Left ventricle myocardium inferior (tissue), 1 donor: ENCODE measurements at regions of chrX and their contacts with region 1.

Region 1: GRCh38 chrX:118226090-118226428 is 109.4 kb upstream of the KLHL13 start:
- DNase-seq: no peak
- H3K4me3 ChIP-seq: no peak overlapping the region
- H3K27ac ChIP-seq: no peak overlapping the region
- H3K4me1 ChIP-seq: no peaks in the 10 kb centered on the region
- H3K27me3 ChIP-seq: no peaks in the 10 kb centered on the region
- CTCF ChIP-seq: peak; percentile 50

Region 2: DNA sequence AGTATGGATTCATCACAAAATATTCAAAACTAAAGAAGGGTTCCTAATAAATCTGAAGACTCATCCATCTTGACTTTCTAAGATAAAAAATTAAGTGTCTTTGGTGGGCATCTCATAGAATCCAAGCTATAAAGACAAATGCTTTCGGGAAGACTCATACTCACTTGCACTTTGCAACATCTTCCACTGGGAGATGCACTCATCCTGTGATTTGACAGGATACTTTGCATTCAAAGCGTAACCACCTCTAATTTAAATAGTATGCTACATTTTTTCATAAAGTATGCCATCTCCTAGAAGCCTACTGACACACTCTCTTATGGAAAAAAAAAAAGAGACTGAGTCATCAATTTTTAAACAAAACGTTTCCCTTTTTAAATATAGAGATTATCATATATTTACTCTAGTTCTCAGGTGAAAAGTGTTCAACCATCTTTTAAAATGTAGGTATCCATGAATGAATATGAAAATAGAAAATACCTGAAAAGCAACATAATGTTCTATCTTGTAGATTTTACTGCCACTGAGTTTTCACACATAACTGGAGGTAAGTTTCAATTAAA is 229.1 kb before region 1 on chrX:
- intact Hi-C with region 1: loop called (anchors 10 kb)
- DNase-seq: no peak
- H3K4me3 ChIP-seq: no peak overlapping the region
- H3K27ac ChIP-seq: no peak overlapping the region
- H3K4me1 ChIP-seq: no peaks in the 10 kb centered on the region
- H3K27me3 ChIP-seq: no peaks in the 10 kb centered on the region
- CTCF ChIP-seq: peak; percentile 46